Vagina (tissue), 2 donors: ENCODE measurements at regions of chr11 and their contacts with region 1.

Region 1: DNA sequence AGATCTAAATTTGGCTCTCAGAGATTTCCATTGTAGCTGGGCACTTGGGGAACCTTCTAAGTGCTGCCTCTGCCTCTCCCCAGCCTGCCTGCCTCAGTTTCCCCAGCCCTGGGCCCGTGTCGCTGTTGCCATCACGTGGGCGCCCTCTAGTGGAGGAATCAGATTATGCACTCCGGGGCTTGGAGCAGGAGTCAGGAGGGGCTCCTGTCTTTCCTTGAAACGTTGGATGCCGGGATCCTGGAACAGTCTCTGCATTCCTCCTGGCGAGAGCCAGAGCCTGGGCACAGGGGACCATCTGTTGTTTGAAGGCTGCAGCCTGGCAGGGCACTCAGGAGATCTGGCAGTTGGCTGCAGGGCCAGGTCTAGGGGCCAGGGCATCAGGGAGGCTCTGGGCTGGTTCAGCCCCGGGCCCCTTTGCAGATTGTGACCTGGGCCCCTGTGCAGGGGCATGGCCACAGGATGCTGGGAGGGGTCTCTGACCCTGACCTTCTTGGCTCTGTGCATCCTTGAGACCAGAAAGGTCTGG is 71.6 kb downstream of the LRP5 start:
- DNase-seq: no peak
- H3K4me3 ChIP-seq: no peak overlapping the region
- H3K27ac ChIP-seq: no peak overlapping the region
- H3K4me1 ChIP-seq: peaks cover 22% of the 10 kb centered on the region
- H3K27me3 ChIP-seq: no peaks in the 10 kb centered on the region
- CTCF ChIP-seq: peak; percentile 69 to 85 (median 76)
- POLR2A ChIP-seq: no peak

Region 2: GRCh38 chr11:68213555-68214174 is 170.4 kb before region 1 on chr11:
- intact Hi-C with region 1: loop called (anchors 5 kb)
- DNase-seq: no peak
- H3K4me3 ChIP-seq: peak overlapping the region; percentile 82 to 94
- H3K27ac ChIP-seq: peak overlapping the region; percentile 98
- H3K4me1 ChIP-seq: peaks cover 63% of the 10 kb centered on the region
- H3K27me3 ChIP-seq: no peaks in the 10 kb centered on the region
- CTCF ChIP-seq: no peak
- POLR2A ChIP-seq: peak in 1 of 2 donors; percentile 89

Region 3: DNA sequence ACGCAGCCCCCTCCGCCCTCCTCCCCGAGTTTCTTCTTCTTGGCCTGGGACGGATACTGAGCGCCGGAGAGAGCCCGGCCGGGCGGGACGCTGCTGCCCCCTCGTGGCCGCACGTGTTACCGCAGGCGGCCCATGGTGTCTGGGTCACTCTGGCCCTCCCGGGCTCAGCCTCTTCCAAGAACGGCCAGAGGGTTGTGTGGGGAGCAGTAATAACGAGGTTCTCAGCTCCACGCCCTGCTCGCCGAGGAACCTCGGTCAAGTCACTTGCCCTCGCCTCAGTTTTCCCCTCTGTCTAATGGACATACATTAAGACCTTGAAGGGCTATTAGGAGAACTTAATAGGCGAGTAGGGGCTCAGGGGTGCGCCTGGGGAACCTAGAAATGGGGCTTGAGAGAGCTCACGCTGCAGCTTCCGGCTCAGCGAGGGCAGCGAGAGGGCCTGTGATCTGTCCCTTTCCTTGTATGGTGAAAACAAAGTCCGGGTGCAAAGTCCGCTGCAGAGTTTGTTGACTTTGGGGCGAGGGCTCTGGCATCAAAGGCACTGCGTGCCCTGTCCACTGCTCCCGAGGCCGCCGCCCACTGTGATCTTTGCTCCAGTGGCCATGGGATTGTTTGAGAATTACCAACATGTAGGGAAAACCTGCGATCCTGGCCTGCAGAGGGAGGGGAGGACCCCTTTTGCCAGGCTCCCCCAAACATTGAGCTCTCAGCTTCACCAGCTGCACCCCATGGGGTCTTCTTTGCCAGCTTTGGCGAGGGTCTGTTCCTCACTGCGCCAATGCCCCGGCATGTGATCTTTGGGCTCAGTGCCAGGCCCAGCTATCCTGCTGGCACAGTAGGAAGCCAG is 86.0 kb before region 1 on chr11:
- intact Hi-C with region 1: loop called (anchors 5 kb)
- DNase-seq: no peak
- H3K4me3 ChIP-seq: peak overlapping the region in 1 of 2 donors; percentile 24
- H3K27ac ChIP-seq: no peak overlapping the region
- H3K4me1 ChIP-seq: peaks cover 13% of the 10 kb centered on the region
- H3K27me3 ChIP-seq: no peaks in the 10 kb centered on the region
- CTCF ChIP-seq: peak; percentile 89 to 94 (median 93)
- POLR2A ChIP-seq: no peak